Ascending aorta (tissue), 2 donors: ENCODE measurements at regions of chr11 and their contacts with region 1.

Region 1: DNA sequence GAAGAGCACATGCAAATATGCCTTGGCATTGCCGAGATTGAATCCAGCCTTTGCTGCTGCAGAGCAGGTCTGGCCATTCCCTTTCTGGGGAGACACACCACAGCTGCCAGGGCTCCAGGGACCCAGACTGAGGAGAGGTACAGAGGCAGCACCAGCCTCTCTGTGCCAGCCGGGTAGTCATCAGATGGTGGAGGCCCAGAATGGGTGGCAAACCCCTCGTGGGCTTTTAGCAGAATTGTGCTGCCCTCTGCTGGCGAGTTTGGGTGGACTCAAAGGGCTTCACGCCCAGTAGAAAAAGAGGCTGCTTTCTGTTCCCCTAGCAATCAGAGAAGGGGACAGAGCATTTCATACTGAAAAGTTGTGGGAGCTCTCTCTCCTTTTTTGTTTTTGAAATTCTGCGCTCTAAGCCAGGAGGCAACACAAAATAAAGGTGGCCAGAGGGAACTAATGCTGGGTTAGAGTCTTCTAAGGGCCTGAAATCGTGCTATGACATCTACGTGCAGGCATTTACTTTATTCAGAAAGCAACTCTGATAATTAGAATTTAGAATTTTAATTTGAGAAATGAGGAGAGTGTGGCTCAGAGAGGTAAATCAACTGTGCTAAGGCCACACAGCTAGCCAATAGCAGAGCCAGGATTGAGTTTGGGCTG is 158.8 kb upstream of the NAV2 start:
- DNase-seq: peak; percentile 26 to 87
- H3K4me3 ChIP-seq: no peak overlapping the region
- H3K27ac ChIP-seq: no peak overlapping the region
- H3K4me1 ChIP-seq: peaks cover 0 to 5% of the 10 kb centered on the region in 2 donors
- H3K27me3 ChIP-seq: no peaks in the 10 kb centered on the region
- CTCF ChIP-seq: peak; percentile 71 to 90 (median 84)

Region 2: DNA sequence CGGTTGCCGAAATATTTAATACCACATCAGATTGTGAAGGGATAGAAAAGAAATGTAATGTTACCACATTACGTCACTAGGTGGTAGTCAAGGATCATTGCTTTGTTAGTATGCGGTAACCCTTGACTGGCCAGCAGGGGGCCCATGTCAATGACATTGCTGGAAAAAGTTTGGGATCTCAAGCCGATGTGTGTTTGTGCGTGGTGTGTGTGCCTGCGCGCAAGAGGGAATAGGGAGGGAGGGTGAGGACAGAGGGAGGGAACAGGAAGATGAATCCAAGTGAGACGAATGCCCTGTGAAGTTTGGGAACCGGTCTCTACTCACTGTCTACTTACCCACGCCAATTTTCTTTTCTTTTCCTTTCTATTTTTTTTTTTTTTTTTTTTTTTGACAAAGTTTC is 482.6 kb before region 1 on chr11:
- intact Hi-C with region 1: loop called (anchors 2 kb)
- DNase-seq: peak; percentile 12 to 68
- H3K4me3 ChIP-seq: peak overlapping the region in 1 of 2 donors; percentile 38
- H3K27ac ChIP-seq: no peak overlapping the region
- H3K4me1 ChIP-seq: no peaks in the 10 kb centered on the region
- H3K27me3 ChIP-seq: no peaks in the 10 kb centered on the region
- CTCF ChIP-seq: peak; percentile 69 to 83 (median 77)

Region 3: DNA sequence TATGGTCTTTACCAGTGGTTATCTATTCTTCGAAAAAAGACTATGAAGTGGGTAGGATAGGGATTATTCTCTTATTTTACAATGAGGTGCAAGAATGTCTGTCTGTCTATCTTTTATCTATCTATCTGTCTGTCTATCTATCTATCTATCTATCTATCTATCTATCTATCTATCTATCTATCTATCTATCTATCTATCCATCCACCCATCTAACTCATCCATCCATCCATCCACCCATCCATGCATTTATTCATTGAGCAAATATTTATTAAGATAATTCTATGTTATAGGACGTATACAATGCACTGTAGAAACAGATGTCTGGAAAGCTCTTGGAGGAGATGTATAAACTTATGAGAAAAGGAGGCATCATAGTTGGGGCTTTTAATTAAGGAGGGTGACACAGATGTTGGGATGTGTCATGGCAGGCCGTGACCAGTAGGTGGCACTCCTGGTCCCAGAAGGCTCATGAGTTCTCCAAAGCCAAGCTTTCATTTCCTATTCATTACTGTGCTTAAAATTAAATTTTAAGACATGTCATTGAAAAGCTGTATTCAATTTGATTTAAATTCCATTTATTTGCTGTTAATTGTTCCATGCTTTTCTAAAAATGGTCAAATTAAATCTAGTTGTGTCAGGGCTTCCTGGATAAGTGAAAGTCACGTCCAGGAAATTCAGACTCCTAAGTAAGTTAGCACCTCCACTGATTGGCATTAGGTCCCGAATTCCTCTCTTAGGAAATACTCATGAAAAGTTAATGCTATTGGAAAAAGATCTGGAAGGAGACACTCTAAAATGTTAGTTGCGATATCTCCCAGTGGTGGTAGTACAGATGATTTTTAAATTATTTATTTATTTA is 294.1 kb before region 1 on chr11:
- intact Hi-C with region 1: loop called (anchors 1 kb)
- DNase-seq: peak in 1 of 2 donors; percentile 77
- H3K4me3 ChIP-seq: peak overlapping the region; percentile 13 to 28
- H3K27ac ChIP-seq: no peak overlapping the region
- H3K4me1 ChIP-seq: no peaks in the 10 kb centered on the region
- H3K27me3 ChIP-seq: no peaks in the 10 kb centered on the region
- CTCF ChIP-seq: peak in 2 of 3 experiments; percentile 90 to 92

Region 4: DNA sequence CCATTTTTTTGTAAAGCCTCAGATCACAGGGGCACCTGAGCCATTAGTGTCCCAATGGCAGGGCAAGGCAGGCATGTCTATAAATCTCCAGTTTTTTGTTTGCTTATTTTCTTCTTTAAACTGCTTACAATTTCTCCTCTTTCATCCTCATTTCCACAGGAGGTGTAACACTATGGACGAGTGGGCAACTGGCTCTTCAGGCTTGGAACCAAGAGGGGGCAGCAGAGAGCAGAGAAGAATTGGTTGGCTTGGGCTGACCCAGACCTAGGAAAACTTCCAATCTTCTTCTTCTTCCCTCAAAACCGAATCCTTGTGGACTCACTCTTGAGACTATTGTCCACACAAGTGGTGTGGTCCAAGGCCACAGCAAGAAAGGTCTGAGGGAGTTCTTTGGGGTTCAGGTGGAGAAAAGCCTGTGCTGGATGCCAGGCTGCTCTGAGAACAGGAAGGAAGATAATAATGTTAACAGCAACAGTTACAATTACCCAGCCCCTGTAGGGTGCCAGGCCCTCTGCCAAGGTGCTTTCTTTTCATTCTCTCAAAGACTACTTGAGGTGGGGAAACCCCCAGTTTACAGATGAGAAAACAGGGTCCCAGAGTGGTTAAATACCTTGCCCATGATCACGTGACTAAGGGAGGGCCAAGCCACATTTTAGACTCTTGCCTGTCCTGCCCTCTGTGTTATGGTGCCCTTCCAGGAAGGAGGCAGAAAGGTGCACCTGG is 242.3 kb before region 1 on chr11:
- intact Hi-C with region 1: loop called (anchors 1 kb)
- DNase-seq: peak in 1 of 2 donors; percentile 72
- H3K4me3 ChIP-seq: no peak overlapping the region
- H3K27ac ChIP-seq: no peak overlapping the region
- H3K4me1 ChIP-seq: peaks cover 0 to 2% of the 10 kb centered on the region in 2 donors
- H3K27me3 ChIP-seq: no peaks in the 10 kb centered on the region
- CTCF ChIP-seq: peak; percentile 72 to 82 (median 82)

Region 5: GRCh38 chr11:19892387-19892786 is 338.6 kb after region 1 on chr11:
- intact Hi-C with region 1: no loop called
- DNase-seq: no peak
- H3K4me3 ChIP-seq: no peak overlapping the region
- H3K27ac ChIP-seq: peak overlapping the region; percentile 24 to 55
- H3K4me1 ChIP-seq: peaks cover 7 to 17% of the 10 kb centered on the region in 2 donors
- H3K27me3 ChIP-seq: no peaks in the 10 kb centered on the region
- CTCF ChIP-seq: no peak

Region 6: DNA sequence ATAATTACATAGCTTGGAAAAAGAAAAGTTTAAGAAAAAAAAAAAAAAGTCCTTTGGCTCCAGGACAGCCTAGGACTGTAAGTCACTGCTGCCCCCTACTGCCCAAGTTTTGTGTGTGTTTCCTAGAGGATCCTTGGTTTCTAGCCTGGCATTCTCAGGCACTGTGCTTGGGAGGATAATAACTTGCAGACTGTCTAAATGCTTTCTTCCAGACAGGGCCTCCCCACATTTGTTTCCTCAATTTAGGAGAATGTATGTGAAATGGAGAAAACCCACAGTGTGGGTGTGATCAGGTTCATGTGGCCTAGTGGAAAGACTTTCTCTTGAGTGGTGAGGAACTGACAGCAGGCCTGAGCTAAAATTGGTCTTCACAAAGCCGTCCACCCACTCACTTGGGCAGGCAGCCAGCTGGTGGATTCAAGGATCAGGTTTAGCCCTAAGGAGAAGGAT is 349.8 kb after region 1 on chr11:
- intact Hi-C with region 1: loop called (anchors 2 kb)
- DNase-seq: peak in 1 of 2 donors; percentile 83
- H3K4me3 ChIP-seq: no peak overlapping the region
- H3K27ac ChIP-seq: peak overlapping the region; percentile 19 to 37
- H3K4me1 ChIP-seq: peaks cover 0 to 33% of the 10 kb centered on the region in 2 donors
- H3K27me3 ChIP-seq: no peaks in the 10 kb centered on the region
- CTCF ChIP-seq: peak; percentile 48 to 76 (median 71)

Region 7: DNA sequence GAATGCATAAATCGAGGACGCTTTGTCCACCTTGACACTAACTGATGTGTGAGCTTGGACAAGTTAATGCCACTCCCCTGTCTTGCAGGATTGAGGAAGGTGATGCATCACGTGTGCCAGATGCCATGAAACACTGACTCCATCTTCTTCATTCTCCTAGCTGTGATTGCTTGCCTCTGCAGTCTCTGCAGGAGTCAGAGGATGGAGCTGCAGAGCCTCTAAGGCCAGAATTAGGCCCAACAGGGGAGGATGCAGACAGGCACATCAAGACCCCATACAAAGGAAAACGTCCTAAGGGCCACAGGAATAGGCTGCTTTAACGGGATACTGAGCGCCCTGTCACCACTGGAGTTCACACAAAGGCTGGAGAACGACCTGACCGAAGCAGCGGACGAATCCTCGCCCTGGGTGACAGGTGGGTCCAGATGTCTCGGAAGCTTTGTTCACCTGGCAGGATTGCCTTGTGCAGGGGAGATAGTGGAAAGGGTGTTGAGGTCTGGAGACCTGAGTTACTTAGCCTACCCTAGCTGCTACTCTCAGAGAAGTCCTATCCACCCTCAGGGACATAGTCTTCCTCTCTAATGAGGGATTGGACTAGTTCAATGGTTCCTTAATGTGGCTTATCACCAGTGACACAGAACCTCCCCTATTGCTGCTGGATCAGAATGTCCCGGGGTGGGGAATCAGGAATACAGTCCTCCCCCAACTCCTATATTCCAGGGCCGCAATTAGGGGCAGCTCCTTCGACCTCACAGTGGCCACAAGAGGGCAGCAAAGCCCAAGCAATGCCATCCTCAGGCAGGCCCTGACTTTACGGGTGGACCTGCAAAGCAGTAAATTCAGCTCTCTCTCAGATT is 574.1 kb after region 1 on chr11:
- intact Hi-C with region 1: loop called (anchors 2 kb)
- DNase-seq: peak in 1 of 2 donors; percentile 84
- H3K4me3 ChIP-seq: no peak overlapping the region
- H3K27ac ChIP-seq: peak overlapping the region in 1 of 2 donors; percentile 17
- H3K4me1 ChIP-seq: peaks cover 0 to 2% of the 10 kb centered on the region in 2 donors
- H3K27me3 ChIP-seq: no peaks in the 10 kb centered on the region
- CTCF ChIP-seq: peak; percentile 82 to 86 (median 84)

Region 8: GRCh38 chr11:20363500-20364411 is 809.9 kb after region 1 on chr11 and contains the start of gene HTATIP2:
- intact Hi-C with region 1: loop called (anchors 10 kb)
- DNase-seq: peak in 1 of 2 donors; percentile 82
- H3K4me3 ChIP-seq: peak within 1 kb of the TSS; percentile 91 to 99
- H3K27ac ChIP-seq: peak within 1 kb of the TSS; percentile 78 to 95
- H3K4me1 ChIP-seq: peaks cover 4 to 14% of the 10 kb centered on the region in 2 donors
- H3K27me3 ChIP-seq: no peaks in the 10 kb centered on the region
- CTCF ChIP-seq: no peak
- total RNA-seq, gene HTATIP2: 34.6 TPM